Calu3 (cell line): ENCODE measurements at regions of chr1 and their contacts with region 1.

Region 1: GRCh38 chr1:47558601-47559593 is 121.1 kb downstream of the FOXD2 start:
- DNase-seq: peak; percentile 53
- H3K4me3 Mint-ChIP-seq: peak overlapping the region; percentile 62
- H3K27ac Mint-ChIP-seq: peak overlapping the region; percentile 82
- H3K4me1 Mint-ChIP-seq: peaks cover 92% of the 10 kb centered on the region
- H3K27me3 Mint-ChIP-seq: no peaks in the 10 kb centered on the region
- CTCF ChIP-seq: no peak

Region 2: GRCh38 chr1:47569681-47570470 is 11.0 kb after region 1 on chr1:
- CTCF ChIA-PET with region 1: interaction called, 25 read pairs
- intact Hi-C with region 1: no loop called
- DNase-seq: peak; percentile 81
- H3K4me3 Mint-ChIP-seq: no peak overlapping the region
- H3K27ac Mint-ChIP-seq: peak overlapping the region; percentile 70
- H3K4me1 Mint-ChIP-seq: peaks cover 21% of the 10 kb centered on the region
- H3K27me3 Mint-ChIP-seq: no peaks in the 10 kb centered on the region
- CTCF ChIP-seq: no peak